Activated CD8-positive, alpha-beta T cell treated with anti-CD3 and anti-CD28 coated beads, Interleukin-2, amount 10 ng/mL, durations not matched to agents 7 days and 5 days (primary cell): ENCODE measurements at regions of chr14 and their contacts with region 1.

Region 1: GRCh38 chr14:72420725-72421474 is 473.0 kb downstream of the DPF3 start:
- DNase-seq: peak; percentile 87
- ATAC-seq: no peak
- H3K4me3 Mint-ChIP-seq: no peak overlapping the region
- H3K27ac Mint-ChIP-seq: peak overlapping the region; percentile 79
- H3K4me1 Mint-ChIP-seq: peaks cover 17% of the 10 kb centered on the region
- H3K27me3 Mint-ChIP-seq: peaks cover 16% of the 10 kb centered on the region

Region 2: GRCh38 chr14:72023722-72024407 is 397.0 kb before region 1 on chr14:
- CTCF ChIA-PET with region 1: interaction called, 26 read pairs
- POLR2A ChIA-PET with region 1: no interaction called
- DNase-seq: peak; percentile 58
- ATAC-seq: peak; percentile 61
- H3K4me3 Mint-ChIP-seq: no peak overlapping the region
- H3K27ac Mint-ChIP-seq: no peak overlapping the region
- H3K4me1 Mint-ChIP-seq: peaks cover 8% of the 10 kb centered on the region
- H3K27me3 Mint-ChIP-seq: peaks cover 19% of the 10 kb centered on the region

Region 3: DNA sequence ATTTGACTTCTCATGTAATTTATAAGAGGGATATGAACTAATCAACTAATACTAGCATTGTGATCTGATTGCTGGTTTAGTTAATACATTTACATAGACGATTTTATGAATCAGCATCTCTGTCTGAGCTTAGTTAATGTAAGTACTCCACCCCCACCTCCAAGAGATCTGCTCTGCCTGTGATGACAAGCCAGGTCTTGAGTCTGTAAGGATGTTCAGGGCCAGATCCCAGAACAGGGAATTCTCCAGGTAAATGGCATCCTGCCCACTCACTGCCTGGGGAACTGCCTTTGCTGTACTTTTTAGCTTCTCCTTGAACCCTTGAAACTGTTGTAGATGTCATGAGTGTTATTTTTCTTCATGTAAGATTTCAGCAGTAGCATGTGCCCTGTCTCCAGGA is 198.9 kb before region 1 on chr14:
- CTCF ChIA-PET with region 1: no interaction called
- POLR2A ChIA-PET with region 1: no interaction called
- DNase-seq: no peak
- ATAC-seq: no peak
- H3K4me3 Mint-ChIP-seq: no peak overlapping the region
- H3K27ac Mint-ChIP-seq: no peak overlapping the region
- H3K4me1 Mint-ChIP-seq: no peaks in the 10 kb centered on the region
- H3K27me3 Mint-ChIP-seq: peaks cover 4% of the 10 kb centered on the region

Region 4: GRCh38 chr14:72433521-72433920 is 12.6 kb after region 1 on chr14:
- CTCF ChIA-PET with region 1: interaction called, 20 read pairs
- POLR2A ChIA-PET with region 1: no interaction called
- DNase-seq: no peak
- ATAC-seq: no peak
- H3K4me3 Mint-ChIP-seq: no peak overlapping the region
- H3K27ac Mint-ChIP-seq: no peak overlapping the region
- H3K4me1 Mint-ChIP-seq: peaks cover 64% of the 10 kb centered on the region
- H3K27me3 Mint-ChIP-seq: peaks cover 2% of the 10 kb centered on the region

Region 5: GRCh38 chr14:72443991-72444441 is 23.1 kb after region 1 on chr14:
- CTCF ChIA-PET with region 1: interaction called, 20 read pairs
- POLR2A ChIA-PET with region 1: no interaction called
- DNase-seq: peak; percentile 82
- ATAC-seq: peak; percentile 34
- H3K4me3 Mint-ChIP-seq: peak overlapping the region; percentile 54
- H3K27ac Mint-ChIP-seq: peak overlapping the region; percentile 85
- H3K4me1 Mint-ChIP-seq: peaks cover 87% of the 10 kb centered on the region
- H3K27me3 Mint-ChIP-seq: no peaks in the 10 kb centered on the region

Region 6: DNA sequence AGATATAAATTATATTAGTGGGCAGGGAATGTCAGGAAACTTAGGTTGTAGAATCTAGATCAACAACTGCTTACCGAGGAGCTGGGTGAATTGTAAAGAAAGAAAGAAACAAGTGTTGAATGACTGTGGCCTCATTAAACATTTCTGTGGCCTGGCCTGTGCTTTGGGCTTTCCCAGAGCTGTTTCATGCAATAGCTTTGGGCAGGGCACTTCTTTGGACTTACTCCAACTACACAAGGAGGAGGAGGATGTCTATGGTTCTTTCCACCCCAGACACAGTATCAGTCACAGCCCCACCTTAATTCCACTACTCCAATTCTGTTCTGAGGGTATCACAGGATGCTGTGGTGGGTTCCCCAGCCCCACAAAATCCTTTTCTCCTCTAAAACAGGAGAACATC is 435.0 kb after region 1 on chr14:
- CTCF ChIA-PET with region 1: no interaction called
- POLR2A ChIA-PET with region 1: no interaction called
- DNase-seq: no peak
- ATAC-seq: no peak
- H3K4me3 Mint-ChIP-seq: no peak overlapping the region
- H3K27ac Mint-ChIP-seq: no peak overlapping the region
- H3K4me1 Mint-ChIP-seq: peaks cover 14% of the 10 kb centered on the region
- H3K27me3 Mint-ChIP-seq: peaks cover 10% of the 10 kb centered on the region